ENCODE measurements at regions of chr10 and their contacts with region 1.

Region 1: GRCh38 chr10:23438550-23439441 is at the start of gene OTUD1:
- DNase-seq: peak; percentile 74 to 96
- H3K4me3 ChIP-seq: peak within 1 kb of the TSS; percentile 78
- H3K27ac ChIP-seq: peak within 1 kb of the TSS; percentile 37; the same call in 1 of the 2 replicates
- H3K4me1 ChIP-seq: peaks cover 31% of the 10 kb centered on the region
- H3K27me3 ChIP-seq: no peaks in the 10 kb centered on the region
- CTCF ChIP-seq: no peak
- total RNA-seq, gene OTUD1: 16.9 and 21.4 TPM in 2 replicates

Region 2: GRCh38 chr10:21516242-21517131 is 1922.3 kb before region 1 on chr10:
- CTCF ChIA-PET with region 1: no interaction called
- POLR2A ChIA-PET with region 1: no interaction called
- intact Hi-C with region 1: loop called (anchors 10 kb)
- DNase-seq: peak in 1 of 2 experiments; percentile 52
- H3K4me3 ChIP-seq: peak overlapping the region; percentile 66; the same call in 1 of the 2 replicates
- H3K27ac ChIP-seq: no peak overlapping the region
- H3K4me1 ChIP-seq: peaks cover 26% of the 10 kb centered on the region
- H3K27me3 ChIP-seq: no peaks in the 10 kb centered on the region
- CTCF ChIP-seq: no peak

Region 3: GRCh38 chr10:23314835-23315239 is 124.0 kb before region 1 on chr10:
- CTCF ChIA-PET with region 1: no interaction called
- POLR2A ChIA-PET with region 1: no interaction called
- intact Hi-C with region 1: loop called (anchors 1 kb)
- DNase-seq: peak; percentile 45 to 76
- H3K4me3 ChIP-seq: no peak overlapping the region
- H3K27ac ChIP-seq: no peak overlapping the region
- H3K4me1 ChIP-seq: 0 out of 2 replicates have a peak, but pooled peaks cover 5% of the 10 kb centered on the region
- H3K27me3 ChIP-seq: no peaks in the 10 kb centered on the region
- CTCF ChIP-seq: peak; percentile 80

Region 4: DNA sequence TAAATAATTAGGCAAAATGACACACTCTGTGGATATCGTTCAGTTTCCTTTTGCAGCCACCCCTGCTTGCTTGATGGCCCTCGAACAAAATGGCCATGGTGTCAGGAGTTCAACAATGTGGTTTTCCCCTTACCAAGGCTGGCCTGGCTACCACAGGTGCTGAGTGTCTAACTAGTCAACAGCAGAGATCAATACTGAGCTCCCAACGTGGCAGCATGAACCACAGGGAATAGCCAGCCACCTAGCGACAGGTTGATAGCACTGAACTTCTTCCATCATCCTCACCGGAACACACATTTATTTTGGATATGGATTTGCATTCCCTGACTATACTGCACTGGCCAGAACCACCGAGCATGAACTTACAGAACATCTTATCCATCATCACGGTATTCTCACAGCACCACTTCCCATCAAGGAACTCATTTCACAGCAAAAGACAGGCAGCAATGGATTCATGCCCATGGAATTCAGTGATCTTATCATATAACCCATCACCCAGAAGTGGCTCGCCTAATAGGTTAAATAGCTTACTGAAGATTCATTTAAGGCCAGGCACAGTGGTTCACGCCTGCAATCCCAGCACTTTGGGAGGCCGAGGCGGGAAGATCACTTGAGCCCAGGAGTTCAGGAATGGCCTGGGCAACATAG is 100.5 kb before region 1 on chr10:
- CTCF ChIA-PET with region 1: no interaction called
- POLR2A ChIA-PET with region 1: interaction called, 20 read pairs
- intact Hi-C with region 1: loop called (anchors 2 kb)
- DNase-seq: peak; percentile 64 to 94
- H3K4me3 ChIP-seq: no peak overlapping the region
- H3K27ac ChIP-seq: peak overlapping the region; percentile 85
- H3K4me1 ChIP-seq: peaks cover 64% of the 10 kb centered on the region
- H3K27me3 ChIP-seq: no peaks in the 10 kb centered on the region
- CTCF ChIP-seq: peak; percentile 44

Region 5: GRCh38 chr10:23344241-23344841 is 94.5 kb before region 1 on chr10 and contains the start of gene C10orf67:
- CTCF ChIA-PET with region 1: no interaction called
- POLR2A ChIA-PET with region 1: interaction called, 20 read pairs
- intact Hi-C with region 1: loop called (anchors 1 kb)
- DNase-seq: peak; percentile 49 to 59
- H3K4me3 ChIP-seq: peak within 1 kb of the TSS; percentile 63
- H3K27ac ChIP-seq: peak within 1 kb of the TSS; percentile 82
- H3K4me1 ChIP-seq: peaks cover 56% of the 10 kb centered on the region
- H3K27me3 ChIP-seq: no peaks in the 10 kb centered on the region
- CTCF ChIP-seq: no peak
- total RNA-seq, gene C10orf67: 1.2 and 1.3 TPM in 2 replicates

Region 6: GRCh38 chr10:23417244-23417643 is 21.6 kb before region 1 on chr10:
- CTCF ChIA-PET with region 1: interaction called, 4 read pairs
- POLR2A ChIA-PET with region 1: interaction called, 5 read pairs
- intact Hi-C with region 1: loop called (anchors 1 kb)
- DNase-seq: peak in 1 of 2 experiments; percentile 76
- H3K4me3 ChIP-seq: no peak overlapping the region
- H3K27ac ChIP-seq: peak overlapping the region; percentile 70
- H3K4me1 ChIP-seq: peaks cover 60% of the 10 kb centered on the region
- H3K27me3 ChIP-seq: no peaks in the 10 kb centered on the region
- CTCF ChIP-seq: no peak

Region 7: DNA sequence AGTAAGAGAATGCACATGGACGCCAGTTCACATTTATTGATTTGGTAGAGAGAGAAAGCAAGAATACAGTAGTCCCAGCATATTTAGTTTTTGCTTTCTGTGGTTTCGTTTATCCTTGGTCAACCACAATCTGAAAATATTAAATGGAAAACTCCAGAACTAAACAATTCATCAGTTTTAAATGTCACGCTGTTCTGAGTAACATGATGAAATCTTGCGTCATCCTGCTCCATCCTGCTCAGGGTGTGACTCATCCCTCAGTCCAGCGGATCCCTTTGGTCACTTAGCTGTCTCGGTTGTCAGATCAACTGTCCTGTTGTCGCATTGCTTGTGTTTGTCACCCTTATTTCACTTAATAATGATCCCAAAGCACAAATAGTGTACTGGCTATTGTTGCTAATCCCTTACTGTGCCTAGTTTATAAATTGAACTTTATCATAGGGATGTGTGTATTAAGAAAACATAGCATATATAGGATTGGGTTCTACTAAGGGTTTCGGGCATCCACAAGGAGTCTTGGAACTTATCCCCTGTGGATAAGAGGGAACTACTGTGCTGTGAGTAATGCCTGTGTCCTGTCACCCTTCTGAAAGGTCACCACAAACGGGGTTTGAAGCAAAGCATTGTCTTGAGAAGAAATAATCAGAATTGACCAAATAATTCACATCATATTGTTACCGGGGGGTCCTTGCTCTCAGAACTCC is 73.7 kb after region 1 on chr10:
- CTCF ChIA-PET with region 1: no interaction called
- POLR2A ChIA-PET with region 1: interaction called, 4 read pairs
- intact Hi-C with region 1: loop called (anchors 5 kb)
- DNase-seq: peak; percentile 20 to 72
- H3K4me3 ChIP-seq: no peak overlapping the region
- H3K27ac ChIP-seq: peak overlapping the region; percentile 92
- H3K4me1 ChIP-seq: peaks cover 33% of the 10 kb centered on the region
- H3K27me3 ChIP-seq: no peaks in the 10 kb centered on the region
- CTCF ChIP-seq: no peak